ENCODE measurements at regions of chr1 and their contacts with region 1.

Region 1: DNA sequence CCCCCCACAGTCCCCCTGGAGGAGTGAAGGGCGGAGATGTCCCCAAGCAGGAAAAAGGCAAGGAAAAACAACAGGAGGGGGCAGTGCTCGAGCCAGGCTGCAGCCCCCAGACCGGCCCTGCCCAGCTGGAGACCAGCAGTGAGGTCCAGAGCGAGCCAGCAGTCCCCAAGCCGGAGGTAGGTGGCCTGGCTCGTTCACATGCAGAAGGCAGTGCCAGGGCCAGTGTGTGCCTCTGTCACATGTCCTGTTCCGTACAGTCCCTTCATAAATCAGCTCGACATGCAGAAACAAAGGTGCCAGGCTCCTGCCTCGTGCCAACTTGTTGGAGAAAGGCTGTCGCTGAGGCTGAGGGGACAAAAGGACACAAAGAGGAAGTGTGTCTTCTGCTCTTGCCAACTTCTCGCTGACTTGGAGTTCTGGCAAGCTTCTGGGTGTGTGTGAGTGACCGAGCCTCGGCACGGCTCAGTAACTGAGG is 24.1 kb upstream of the MPZL1 start:
- DNase-seq: no peak
- CTCF ChIP-seq: no peak

Region 2: GRCh38 chr1:167708940-167709389 is 11.3 kb after region 1 on chr1:
- CTCF ChIA-PET with region 1: interaction called, 15 read pairs
- POLR2A ChIA-PET with region 1: no interaction called
- DNase-seq: no peak
- CTCF ChIP-seq: no peak